Keratinocyte (primary cell): ENCODE measurements at regions of chr2 and their contacts with region 1.

Region 1: GRCh38 chr2:88669371-88670214 is 21.9 kb upstream of the RPIA start:
- DNase-seq: no peak
- H3K4me3 ChIP-seq: no peak overlapping the region
- H3K27ac ChIP-seq: no peak overlapping the region
- H3K4me1 ChIP-seq: peaks cover 10% of the 10 kb centered on the region
- H3K27me3 ChIP-seq: no peaks in the 10 kb centered on the region
- CTCF ChIP-seq: peak; percentile 60 to 84 (median 72)

Region 2: GRCh38 chr2:88599527-88599926 is 70.1 kb before region 1 on chr2:
- dilution Hi-C with region 1: loop called (anchors 5 kb)
- DNase-seq: no peak
- H3K4me3 ChIP-seq: no peak overlapping the region
- H3K27ac ChIP-seq: peak overlapping the region; percentile 70
- H3K4me1 ChIP-seq: peaks cover 30% of the 10 kb centered on the region
- H3K27me3 ChIP-seq: no peaks in the 10 kb centered on the region
- CTCF ChIP-seq: no peak